GM12878 (cell line): ENCODE measurements at regions of chr10 and their contacts with region 1.

Region 1: GRCh38 chr10:102291221-102291905 is 46.0 kb downstream of the GBF1 start:
- DNase-seq: no peak
- ATAC-seq: no peak
- H3K4me3 ChIP-seq: no peak overlapping the region
- H3K27ac ChIP-seq: no peak overlapping the region
- H3K4me1 ChIP-seq: no peaks in the 10 kb centered on the region
- H3K27me3 ChIP-seq: no peaks in the 10 kb centered on the region
- CTCF ChIP-seq: no peak
- EP300 ChIP-seq: no peak
- POLR2A ChIP-seq: no peak
- RAD21 ChIP-seq: no peak

Region 2: DNA sequence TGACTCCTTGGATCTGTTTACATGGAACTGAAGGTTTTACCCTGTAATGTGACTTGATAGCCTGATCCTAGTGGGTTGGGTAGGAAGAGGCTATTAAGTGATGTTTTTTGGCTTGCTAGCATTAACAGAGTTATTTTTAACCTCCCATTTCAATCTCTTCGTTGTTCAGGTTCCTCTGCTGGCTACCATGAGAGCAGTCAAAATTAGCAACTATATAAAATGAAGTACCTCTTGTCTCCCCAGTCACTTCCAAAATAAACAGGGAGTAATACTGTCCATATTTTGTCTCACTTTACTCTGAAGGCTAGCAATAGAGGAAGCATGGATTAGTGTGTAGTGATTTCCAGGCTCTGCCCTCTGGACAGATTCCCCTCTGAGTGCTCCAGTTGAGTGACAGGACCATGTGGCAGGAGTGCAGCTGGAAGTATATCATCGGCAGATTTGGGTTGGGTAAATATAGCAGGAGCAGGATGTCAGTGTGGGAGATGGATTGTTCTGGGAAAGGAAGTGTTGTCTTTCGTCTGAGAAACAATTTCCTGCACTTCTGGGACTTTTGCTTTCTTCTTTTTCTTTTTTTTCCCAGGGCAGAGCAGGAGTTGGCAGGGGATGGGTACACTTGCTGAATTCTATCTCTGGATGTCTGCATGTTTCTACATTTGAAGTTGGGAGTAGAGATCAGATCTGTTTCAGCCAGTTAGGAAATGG is 10.8 kb before region 1 on chr10:
- CTCF ChIA-PET with region 1: interaction called, 4 read pairs
- POLR2A ChIA-PET with region 1: interaction called, 3 read pairs
- RAD21 ChIA-PET with region 1: no interaction called
- SMC1A ChIA-PET with region 1: interaction called, 16 read pairs
- in situ Hi-C with region 1: no loop called
- intact Hi-C with region 1: no loop called
- DNase-seq: no peak
- ATAC-seq: peak; percentile 44
- H3K4me3 ChIP-seq: peak overlapping the region; percentile 14; the same call in 1 of the 2 replicates
- H3K27ac ChIP-seq: peak overlapping the region; percentile 44
- H3K4me1 ChIP-seq: peaks cover 6% of the 10 kb centered on the region; the same call in 1 of the 2 replicates
- H3K27me3 ChIP-seq: no peaks in the 10 kb centered on the region
- CTCF ChIP-seq: no peak
- EP300 ChIP-seq: no peak
- POLR2A ChIP-seq: no peak
- RAD21 ChIP-seq: no peak